HAP-1 (cell line): ENCODE measurements at regions of chr12 and their contacts with region 1.

Region 1: GRCh38 chr12:2884810-2885209 is 5.9 kb upstream of the TULP3 start:
- DNase-seq: no peak
- H3K4me3 ChIP-seq: no peak overlapping the region
- H3K4me1 ChIP-seq: no peaks in the 10 kb centered on the region
- H3K27me3 ChIP-seq: no peaks in the 10 kb centered on the region

Region 2: GRCh38 chr12:2959505-2960389 is 74.9 kb after region 1 on chr12:
- in situ Hi-C with region 1: loop called (anchors 5 kb)
- DNase-seq: peak; percentile 11 to 74
- H3K4me3 ChIP-seq: peak overlapping the region; percentile 72
- H3K4me1 ChIP-seq: peaks cover 14% of the 10 kb centered on the region
- H3K27me3 ChIP-seq: no peaks in the 10 kb centered on the region